B cell (primary cell): ENCODE measurements at regions of chr4 and their contacts with region 1.

Region 1: GRCh38 chr4:75908555-75908954 is 6.3 kb upstream of the PPEF2 start:
- DNase-seq: no peak
- ATAC-seq: no peak
- H3K4me3 ChIP-seq: no peak overlapping the region
- H3K4me3 Mint-ChIP-seq: no peak overlapping the region
- H3K27ac ChIP-seq: no peak overlapping the region
- H3K27ac Mint-ChIP-seq: no peak overlapping the region
- H3K4me1 ChIP-seq: peaks cover 4% of the 10 kb centered on the region in 2 donors
- H3K4me1 Mint-ChIP-seq: peaks cover 3% of the 10 kb centered on the region
- H3K27me3 ChIP-seq: peaks cover 0 to 2% (median 0%) of the 10 kb centered on the region in 4 experiments
- H3K27me3 Mint-ChIP-seq: no peaks in the 10 kb centered on the region
- CTCF ChIP-seq: no peak

Region 2: GRCh38 chr4:75895744-75896314 is 12.7 kb before region 1 on chr4:
- CTCF ChIA-PET with region 1: interaction called, 30 read pairs
- POLR2A ChIA-PET with region 1: no interaction called
- intact Hi-C with region 1: no loop called
- DNase-seq: peak; percentile 73
- ATAC-seq: peak; percentile 68
- H3K4me3 ChIP-seq: no peak overlapping the region
- H3K4me3 Mint-ChIP-seq: no peak overlapping the region
- H3K27ac ChIP-seq: no peak overlapping the region
- H3K27ac Mint-ChIP-seq: no peak overlapping the region
- H3K4me1 ChIP-seq: no peaks in the 10 kb centered on the region
- H3K4me1 Mint-ChIP-seq: no peaks in the 10 kb centered on the region
- H3K27me3 ChIP-seq: no peaks in the 10 kb centered on the region
- H3K27me3 Mint-ChIP-seq: no peaks in the 10 kb centered on the region
- CTCF ChIP-seq: peak; percentile 80

Region 3: DNA sequence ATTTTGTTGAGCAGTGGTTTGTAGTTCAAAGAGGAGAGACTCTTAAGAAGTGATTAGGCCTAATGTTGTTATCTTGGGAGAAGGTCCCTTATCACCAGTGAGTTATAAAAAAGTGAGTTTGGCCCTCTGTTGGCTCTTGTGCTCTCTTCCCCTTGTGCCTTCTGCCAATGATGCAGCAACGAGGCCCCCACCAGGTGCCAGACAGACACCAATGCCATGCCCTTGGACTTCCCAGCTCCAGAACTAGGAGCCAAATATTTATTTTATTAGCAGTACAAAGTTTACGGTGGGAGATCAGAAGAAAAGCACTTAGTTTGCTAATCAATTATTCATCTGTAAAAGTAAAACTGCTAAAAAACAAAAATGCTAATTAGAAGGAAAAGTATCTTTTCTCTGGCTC is 55.0 kb after region 1 on chr4:
- CTCF ChIA-PET with region 1: no interaction called
- POLR2A ChIA-PET with region 1: no interaction called
- intact Hi-C with region 1: no loop called
- DNase-seq: no peak
- ATAC-seq: no peak
- H3K4me3 ChIP-seq: no peak overlapping the region
- H3K4me3 Mint-ChIP-seq: no peak overlapping the region
- H3K27ac ChIP-seq: no peak overlapping the region
- H3K27ac Mint-ChIP-seq: no peak overlapping the region
- H3K4me1 ChIP-seq: no peaks in the 10 kb centered on the region
- H3K4me1 Mint-ChIP-seq: no peaks in the 10 kb centered on the region
- H3K27me3 ChIP-seq: no peaks in the 10 kb centered on the region
- H3K27me3 Mint-ChIP-seq: no peaks in the 10 kb centered on the region
- CTCF ChIP-seq: no peak